ENCODE measurements at regions of chr6 and their contacts with region 1.

Region 1: GRCh38 chr6:106085984-106086813 is at the start of gene PRDM1:
- DNase-seq: peak; percentile 96
- ATAC-seq: peak; percentile 89
- H3K4me3 ChIP-seq: peak within 1 kb of the TSS; percentile 27 to 76 (median 60)
- H3K4me3 Mint-ChIP-seq: peak within 1 kb of the TSS; percentile 90
- H3K27ac ChIP-seq: peak within 1 kb of the TSS; percentile 1 to 67
- H3K27ac Mint-ChIP-seq: peak within 1 kb of the TSS; percentile 70
- H3K4me1 ChIP-seq: peaks cover 39 to 46% of the 10 kb centered on the region in 2 donors
- H3K4me1 Mint-ChIP-seq: peaks cover 47% of the 10 kb centered on the region
- H3K27me3 ChIP-seq: peaks cover 0 to 8% (median 2%) of the 10 kb centered on the region in 4 experiments
- H3K27me3 Mint-ChIP-seq: peaks cover 6% of the 10 kb centered on the region
- CTCF ChIP-seq: peak; percentile 35
- total RNA-seq, gene PRDM1: 6.9 and 8.5 TPM in 2 replicates

Region 2: DNA sequence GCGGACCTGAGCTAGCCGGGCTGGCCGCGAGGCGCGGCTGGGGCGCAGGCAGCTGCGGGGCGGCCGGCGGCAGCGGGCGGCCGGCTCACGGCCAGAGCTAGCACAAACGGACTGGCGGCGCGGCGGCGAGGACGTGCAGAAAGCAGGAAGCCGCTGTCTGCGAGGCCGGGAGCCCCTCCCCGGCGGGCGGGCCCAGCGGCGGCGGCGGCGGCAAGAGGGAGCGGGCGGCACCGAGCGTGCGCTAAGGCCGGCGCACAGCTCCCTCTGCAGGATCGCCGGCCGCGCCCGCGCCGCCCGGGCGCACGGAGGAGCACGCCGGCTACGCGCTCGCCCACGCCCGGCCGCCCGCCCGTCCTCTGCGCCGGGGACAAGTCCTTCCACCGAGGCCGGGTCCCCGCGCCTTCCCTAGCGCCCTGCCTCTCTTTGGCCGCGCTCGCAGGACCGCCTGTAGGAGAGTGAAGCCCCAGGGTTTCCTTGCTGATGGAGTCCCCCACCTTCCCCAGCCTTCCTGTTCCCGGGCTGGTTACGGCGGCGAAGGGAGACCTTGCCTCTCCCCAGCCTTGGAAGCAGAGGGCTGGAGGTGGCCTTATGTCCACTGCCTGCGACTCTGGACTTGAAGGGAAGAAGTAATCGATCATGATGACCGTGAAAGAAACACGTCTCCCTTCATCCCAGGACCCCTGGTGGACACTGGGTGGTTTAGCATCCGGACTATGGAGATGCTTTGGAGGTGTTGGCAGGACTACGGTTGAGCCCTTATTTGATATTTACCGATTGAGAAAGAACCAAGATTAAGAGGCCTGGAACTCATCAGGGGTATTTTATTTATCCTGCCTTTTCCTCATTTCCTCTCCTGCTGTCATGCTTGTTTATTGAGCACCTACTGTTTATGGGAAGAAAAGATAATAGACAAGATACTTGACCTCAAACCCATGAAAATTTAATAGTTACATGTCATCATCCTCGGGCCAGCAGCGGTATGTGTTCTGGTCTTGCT is 683.0 kb before region 1 on chr6 and contains the start of gene PREP:
- CTCF ChIA-PET with region 1: no interaction called
- POLR2A ChIA-PET with region 1: no interaction called
- intact Hi-C with region 1: loop called (anchors 2 kb)
- DNase-seq: peak; percentile 88
- ATAC-seq: peak; percentile 94
- H3K4me3 ChIP-seq: peak within 1 kb of the TSS; percentile 80 to 87 (median 83)
- H3K4me3 Mint-ChIP-seq: peak within 1 kb of the TSS; percentile 93
- H3K27ac ChIP-seq: peak within 1 kb of the TSS in 1 of 2 donors; percentile 50
- H3K27ac Mint-ChIP-seq: peak within 1 kb of the TSS; percentile 80
- H3K4me1 ChIP-seq: peaks cover 20% of the 10 kb centered on the region in 2 donors
- H3K4me1 Mint-ChIP-seq: peaks cover 41% of the 10 kb centered on the region
- H3K27me3 ChIP-seq: peaks cover 0 to 4% (median 0%) of the 10 kb centered on the region in 4 experiments
- H3K27me3 Mint-ChIP-seq: peaks cover 13% of the 10 kb centered on the region
- CTCF ChIP-seq: peak; percentile 88
- total RNA-seq, gene PREP: 25.8 and 27.0 TPM in 2 replicates

Region 3: DNA sequence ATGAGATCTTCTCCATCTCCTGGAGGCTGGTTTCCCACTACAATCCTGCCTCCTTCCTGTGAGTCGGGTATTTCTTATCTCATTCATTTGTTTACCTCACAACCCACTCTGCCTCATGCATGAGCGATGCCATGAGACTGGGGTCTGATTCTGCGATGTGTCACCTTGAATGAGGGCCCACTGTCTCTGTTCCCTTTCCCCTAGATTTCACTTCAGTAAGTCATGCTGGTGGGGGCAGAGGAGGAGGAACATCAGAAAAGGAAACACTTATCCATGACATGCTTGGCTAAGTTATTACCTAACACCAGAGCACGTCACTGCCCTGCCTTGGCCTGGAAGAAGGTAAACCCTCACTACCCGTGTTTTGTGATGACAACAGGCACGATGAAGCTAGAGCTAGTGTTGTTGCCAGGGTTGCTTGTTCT is 337.4 kb before region 1 on chr6:
- CTCF ChIA-PET with region 1: no interaction called
- POLR2A ChIA-PET with region 1: no interaction called
- intact Hi-C with region 1: no loop called
- DNase-seq: no peak
- ATAC-seq: no peak
- H3K4me3 ChIP-seq: no peak overlapping the region
- H3K4me3 Mint-ChIP-seq: no peak overlapping the region
- H3K27ac ChIP-seq: no peak overlapping the region
- H3K27ac Mint-ChIP-seq: no peak overlapping the region
- H3K4me1 ChIP-seq: peaks cover 0 to 2% of the 10 kb centered on the region in 2 donors
- H3K4me1 Mint-ChIP-seq: peaks cover 3% of the 10 kb centered on the region
- H3K27me3 ChIP-seq: no peaks in the 10 kb centered on the region
- H3K27me3 Mint-ChIP-seq: peaks cover 9% of the 10 kb centered on the region
- CTCF ChIP-seq: no peak

Region 4: GRCh38 chr6:105793130-105793529 is 293.1 kb before region 1 on chr6:
- CTCF ChIA-PET with region 1: no interaction called
- POLR2A ChIA-PET with region 1: no interaction called
- intact Hi-C with region 1: loop called (anchors 10 kb)
- DNase-seq: peak; percentile 67
- ATAC-seq: peak; percentile 73
- H3K4me3 ChIP-seq: no peak overlapping the region
- H3K4me3 Mint-ChIP-seq: no peak overlapping the region
- H3K27ac ChIP-seq: no peak overlapping the region
- H3K27ac Mint-ChIP-seq: no peak overlapping the region
- H3K4me1 ChIP-seq: peaks cover 9 to 15% of the 10 kb centered on the region in 2 donors
- H3K4me1 Mint-ChIP-seq: peaks cover 22% of the 10 kb centered on the region
- H3K27me3 ChIP-seq: no peaks in the 10 kb centered on the region
- H3K27me3 Mint-ChIP-seq: no peaks in the 10 kb centered on the region
- CTCF ChIP-seq: peak; percentile 21

Region 5: GRCh38 chr6:105851113-105851580 is 235.1 kb before region 1 on chr6:
- CTCF ChIA-PET with region 1: no interaction called
- POLR2A ChIA-PET with region 1: no interaction called
- intact Hi-C with region 1: no loop called
- DNase-seq: no peak
- ATAC-seq: no peak
- H3K4me3 ChIP-seq: no peak overlapping the region
- H3K4me3 Mint-ChIP-seq: no peak overlapping the region
- H3K27ac ChIP-seq: no peak overlapping the region
- H3K27ac Mint-ChIP-seq: no peak overlapping the region
- H3K4me1 ChIP-seq: no peaks in the 10 kb centered on the region
- H3K4me1 Mint-ChIP-seq: no peaks in the 10 kb centered on the region
- H3K27me3 ChIP-seq: no peaks in the 10 kb centered on the region
- H3K27me3 Mint-ChIP-seq: no peaks in the 10 kb centered on the region
- CTCF ChIP-seq: no peak

Region 6: DNA sequence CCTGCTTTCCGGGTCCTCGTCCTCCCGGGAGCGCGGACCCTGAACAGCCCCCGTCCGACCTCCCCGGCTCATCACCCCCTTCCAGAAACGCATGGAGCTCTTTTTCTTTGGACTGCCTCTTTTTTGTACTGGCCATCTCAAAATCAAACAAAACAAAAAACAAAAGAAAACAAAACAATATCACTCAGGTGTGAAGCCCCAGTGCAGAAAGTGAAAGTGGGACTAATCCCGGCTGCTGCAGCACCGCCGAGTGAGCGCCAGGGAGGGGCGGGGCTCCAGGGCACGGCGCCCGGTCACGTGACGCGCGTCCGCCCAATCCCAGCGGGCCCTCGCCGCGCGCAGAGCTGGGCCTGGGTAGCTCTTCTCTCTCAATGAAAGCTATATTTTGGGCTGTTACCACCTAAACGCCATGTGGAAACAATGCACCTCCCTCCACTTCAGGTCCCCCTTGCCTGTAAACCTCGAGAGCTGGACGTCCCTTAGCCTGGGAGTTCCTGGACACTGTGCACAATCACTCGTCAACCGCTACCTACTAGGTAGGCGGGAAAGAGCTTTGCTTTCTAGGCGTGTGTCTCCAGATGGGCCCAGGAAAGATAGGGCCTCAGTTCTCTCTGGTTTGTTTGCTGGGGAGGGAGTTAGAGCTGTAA is 93.8 kb before region 1 on chr6:
- CTCF ChIA-PET with region 1: interaction called, 14 read pairs
- POLR2A ChIA-PET with region 1: interaction called, 15 read pairs
- intact Hi-C with region 1: loop called (anchors 1 kb)
- DNase-seq: peak; percentile 94
- ATAC-seq: peak; percentile 93
- H3K4me3 ChIP-seq: peak overlapping the region; percentile 81 to 96 (median 89)
- H3K4me3 Mint-ChIP-seq: peak overlapping the region; percentile 90
- H3K27ac ChIP-seq: peak overlapping the region; percentile 91
- H3K27ac Mint-ChIP-seq: peak overlapping the region; percentile 94
- H3K4me1 ChIP-seq: peaks cover 26 to 28% of the 10 kb centered on the region in 2 donors
- H3K4me1 Mint-ChIP-seq: peaks cover 26% of the 10 kb centered on the region
- H3K27me3 ChIP-seq: peaks cover 4 to 34% (median 22%) of the 10 kb centered on the region in 4 experiments
- H3K27me3 Mint-ChIP-seq: peaks cover 57% of the 10 kb centered on the region
- CTCF ChIP-seq: no peak

Region 7: DNA sequence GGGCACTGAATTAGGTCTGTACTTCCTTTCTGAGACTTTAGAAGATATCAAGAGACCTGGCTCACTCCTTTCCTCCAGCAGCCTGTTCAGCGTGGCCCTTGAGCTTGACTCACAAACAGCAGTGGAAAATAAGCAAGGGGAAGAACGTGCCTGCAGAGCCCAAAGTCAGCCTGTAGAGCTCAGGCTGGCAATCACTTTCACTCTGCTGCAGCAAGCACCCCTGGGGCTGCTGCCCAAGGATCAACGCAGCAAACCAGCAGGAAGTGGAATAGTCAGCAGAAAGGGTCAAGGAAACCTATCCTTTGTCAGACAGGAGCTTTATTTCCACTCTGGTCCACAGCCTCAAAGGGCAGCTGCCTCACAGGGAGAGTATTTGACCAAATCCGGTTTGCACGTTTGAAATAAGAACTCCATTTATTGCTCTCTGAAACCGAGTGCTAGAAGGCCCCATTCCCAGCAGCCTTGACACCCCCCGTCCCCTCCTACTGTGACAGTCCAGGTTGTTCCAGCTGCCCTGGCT is 77.3 kb after region 1 on chr6:
- CTCF ChIA-PET with region 1: interaction called, 11 read pairs
- POLR2A ChIA-PET with region 1: no interaction called
- intact Hi-C with region 1: loop called (anchors 1 kb)
- DNase-seq: peak; percentile 68
- ATAC-seq: peak; percentile 66
- H3K4me3 ChIP-seq: peak overlapping the region in 4 of 5 experiments; percentile 21 to 48 (median 23)
- H3K4me3 Mint-ChIP-seq: peak overlapping the region; percentile 70
- H3K27ac ChIP-seq: peak overlapping the region; percentile 96 to 98
- H3K27ac Mint-ChIP-seq: peak overlapping the region; percentile 88
- H3K4me1 ChIP-seq: peaks cover 22 to 32% of the 10 kb centered on the region in 2 donors
- H3K4me1 Mint-ChIP-seq: peaks cover 31% of the 10 kb centered on the region
- H3K27me3 ChIP-seq: no peaks in the 10 kb centered on the region
- H3K27me3 Mint-ChIP-seq: no peaks in the 10 kb centered on the region
- CTCF ChIP-seq: peak; percentile 9

Region 8: GRCh38 chr6:107114213-107114905 is 1028.2 kb after region 1 on chr6:
- CTCF ChIA-PET with region 1: no interaction called
- POLR2A ChIA-PET with region 1: no interaction called
- intact Hi-C with region 1: loop called (anchors 10 kb)
- DNase-seq: peak; percentile 87
- ATAC-seq: peak; percentile 64
- H3K4me3 ChIP-seq: peak overlapping the region; percentile 19 to 79 (median 54)
- H3K4me3 Mint-ChIP-seq: peak overlapping the region; percentile 86
- H3K27ac ChIP-seq: no peak overlapping the region
- H3K27ac Mint-ChIP-seq: peak overlapping the region; percentile 73
- H3K4me1 ChIP-seq: peaks cover 10 to 17% of the 10 kb centered on the region in 2 donors
- H3K4me1 Mint-ChIP-seq: peaks cover 18% of the 10 kb centered on the region
- H3K27me3 ChIP-seq: peaks cover 0 to 2% (median 0%) of the 10 kb centered on the region in 4 experiments
- H3K27me3 Mint-ChIP-seq: no peaks in the 10 kb centered on the region
- CTCF ChIP-seq: peak; percentile 93